ENCODE measurements at regions of chr4 and their contacts with region 1.

Region 1: GRCh38 chr4:24584175-24584850 is at the start of gene DHX15:
- DNase-seq: peak; percentile 85 to 98
- H3K4me3 ChIP-seq: peak within 1 kb of the TSS; percentile 94 to 98
- H3K27ac ChIP-seq: peak within 1 kb of the TSS; percentile 97 to 98
- H3K4me1 ChIP-seq: peaks cover 5 to 16% of the 10 kb centered on the region in 2 donors
- H3K27me3 ChIP-seq: no peaks in the 10 kb centered on the region
- CTCF ChIP-seq: no peak
- total RNA-seq, gene DHX15: 46.6 TPM

Region 2: DNA sequence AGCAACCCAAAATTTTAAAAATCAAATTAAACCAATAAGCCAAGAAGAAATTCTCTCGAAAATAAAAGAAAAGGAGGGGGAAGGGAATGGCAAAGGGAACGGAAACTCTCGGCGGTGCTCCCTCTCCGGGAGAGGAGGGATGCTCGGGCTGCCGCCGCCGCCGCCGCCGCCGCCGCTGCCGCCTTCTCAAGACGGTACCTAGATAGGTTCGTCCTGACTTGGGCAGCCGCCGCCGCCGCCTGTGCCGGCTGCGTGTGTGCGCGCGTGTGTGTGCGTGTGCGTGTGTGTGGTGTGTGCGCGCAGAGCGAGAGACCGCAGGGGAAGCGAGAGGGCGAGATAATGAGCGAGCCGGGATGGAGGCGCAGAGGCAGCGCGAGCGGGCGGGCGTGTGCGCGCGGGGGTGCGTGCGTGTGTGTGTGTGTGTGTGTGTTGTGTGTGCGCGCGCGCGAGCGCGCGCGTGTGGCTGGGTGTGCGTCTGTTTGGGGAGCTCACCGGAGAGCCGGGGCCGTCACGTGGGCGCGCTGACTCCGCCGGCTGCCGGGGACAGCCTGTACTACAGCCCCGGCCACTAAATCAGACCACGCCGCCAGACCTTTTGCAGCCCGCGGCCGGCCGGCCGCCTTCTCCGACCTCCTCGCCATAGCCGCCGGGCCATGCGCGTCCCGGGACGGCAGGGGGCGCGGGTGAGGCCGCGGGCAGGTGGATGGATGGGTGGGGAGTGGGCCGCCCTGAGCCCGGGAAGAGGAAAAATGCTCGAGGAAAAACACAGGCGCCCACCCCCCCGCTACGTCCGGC is 111.6 kb before region 1 on chr4:
- intact Hi-C with region 1: loop called (anchors 5 kb)
- DNase-seq: peak; percentile 31 to 88
- H3K4me3 ChIP-seq: peak overlapping the region; percentile 60 to 81
- H3K27ac ChIP-seq: peak overlapping the region; percentile 31 to 57
- H3K4me1 ChIP-seq: peaks cover 8 to 15% of the 10 kb centered on the region in 2 donors
- H3K27me3 ChIP-seq: no peaks in the 10 kb centered on the region
- CTCF ChIP-seq: peak; percentile 54 to 73 (median 66)

Region 3: GRCh38 chr4:24730256-24731001 is 146.1 kb after region 1 on chr4:
- intact Hi-C with region 1: loop called (anchors 2 kb)
- DNase-seq: peak; percentile 63 to 94
- H3K4me3 ChIP-seq: no peak overlapping the region
- H3K27ac ChIP-seq: peak overlapping the region; percentile 63 to 78
- H3K4me1 ChIP-seq: peaks cover 3 to 40% of the 10 kb centered on the region in 2 donors
- H3K27me3 ChIP-seq: no peaks in the 10 kb centered on the region
- CTCF ChIP-seq: peak in 1 of 3 experiments; percentile 13

Region 4: GRCh38 chr4:24794916-24795665 is 210.8 kb after region 1 on chr4 and contains the start of gene SOD3:
- intact Hi-C with region 1: loop called (anchors 1 kb)
- DNase-seq: peak; percentile 66 to 96
- H3K4me3 ChIP-seq: peak within 1 kb of the TSS; percentile 48 to 59
- H3K27ac ChIP-seq: peak within 1 kb of the TSS; percentile 95 to 97
- H3K4me1 ChIP-seq: peaks cover 0 to 25% of the 10 kb centered on the region in 2 donors
- H3K27me3 ChIP-seq: no peaks in the 10 kb centered on the region
- CTCF ChIP-seq: no peak
- total RNA-seq, gene SOD3: 893 TPM

Region 5: DNA sequence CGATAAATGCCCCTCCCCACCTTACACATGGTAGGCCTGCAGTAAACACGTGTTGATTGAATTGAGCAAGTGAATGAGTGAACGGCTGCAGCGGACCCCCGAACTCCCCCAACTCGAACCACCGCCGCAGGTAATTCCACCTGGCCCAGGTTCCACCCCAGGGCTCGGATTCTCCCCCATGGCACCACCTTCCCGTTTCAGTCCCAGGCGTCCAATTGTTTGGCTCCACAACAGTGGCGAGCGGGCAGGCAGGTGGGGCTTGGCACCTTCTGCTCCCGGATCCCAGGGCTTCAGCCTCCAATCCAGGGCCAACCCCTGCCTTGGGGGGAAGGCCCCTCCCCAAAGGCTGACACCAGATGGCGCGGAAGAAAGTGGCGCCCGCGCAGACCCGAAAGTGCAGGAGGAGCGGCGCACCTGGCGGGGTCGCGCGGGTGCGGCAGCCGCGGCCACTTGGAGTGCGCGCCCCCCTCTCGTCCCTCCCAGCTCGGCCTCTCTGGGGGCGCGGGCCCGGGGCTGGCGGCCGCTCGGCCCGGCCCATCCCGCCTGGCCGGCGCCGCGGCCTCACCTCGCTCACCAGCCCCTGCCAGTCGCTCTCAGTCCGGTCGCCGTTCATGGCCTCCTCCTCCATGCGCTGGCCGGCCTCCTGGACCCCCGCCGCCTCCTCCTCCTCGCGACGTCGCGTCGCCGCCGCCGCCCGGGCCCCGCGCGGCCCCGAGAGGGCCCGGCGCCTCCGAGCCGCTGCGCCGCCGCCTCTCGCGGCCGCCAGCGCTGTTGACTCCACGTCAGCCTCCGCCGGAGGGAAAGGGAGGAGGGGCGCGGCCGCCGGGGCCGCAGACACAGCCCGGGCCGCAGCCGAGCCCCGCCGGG is 328.2 kb after region 1 on chr4 and contains the start of gene CCDC149:
- intact Hi-C with region 1: loop called (anchors 2 kb)
- DNase-seq: peak in 1 of 2 donors; percentile 83
- H3K4me3 ChIP-seq: peak within 1 kb of the TSS; percentile 91 to 93
- H3K27ac ChIP-seq: peak within 1 kb of the TSS; percentile 93 to 97
- H3K4me1 ChIP-seq: peaks cover 0 to 8% of the 10 kb centered on the region in 2 donors
- H3K27me3 ChIP-seq: no peaks in the 10 kb centered on the region
- CTCF ChIP-seq: no peak
- total RNA-seq, gene CCDC149: 8.7 TPM

Region 6: GRCh38 chr4:25159884-25160713 is 575.8 kb after region 1 on chr4 and contains the start of gene SEPSECS:
- intact Hi-C with region 1: loop called (anchors 5 kb)
- DNase-seq: peak; percentile 90 to 98
- H3K4me3 ChIP-seq: peak within 1 kb of the TSS; percentile 76 to 86
- H3K27ac ChIP-seq: peak within 1 kb of the TSS; percentile 95 to 97
- H3K4me1 ChIP-seq: peaks cover 3 to 15% of the 10 kb centered on the region in 2 donors
- H3K27me3 ChIP-seq: no peaks in the 10 kb centered on the region
- CTCF ChIP-seq: no peak
- total RNA-seq, gene SEPSECS: 5.2 TPM

Measured in ascending aorta (tissue), 2 donors.